H1 (cell line): ENCODE measurements at regions of chr17 and their contacts with region 1.

Region 1: GRCh38 chr17:82022981-82023374 is at the start of gene LRRC45:
- DNase-seq: peak; percentile 98 to 99
- H3K4me3 ChIP-seq: peak within 1 kb of the TSS; percentile 83 to 93 (median 86)
- H3K27ac ChIP-seq: peak within 1 kb of the TSS; percentile 46; the same call in 1 of the 2 replicates
- H3K4me1 ChIP-seq: peaks cover 0 to 14% (median 8%) of the 10 kb centered on the region in 4 experiments; a peak in 5 of 7 replicates
- H3K27me3 ChIP-seq: no peaks in the 10 kb centered on the region
- CTCF ChIP-seq: no peak
- EP300 ChIP-seq: no peak
- POLR2A ChIP-seq: no peak
- RAD21 ChIP-seq: no peak
- total RNA-seq, gene LRRC45: 28.2 and 29.0 TPM in 2 replicates

Region 2: DNA sequence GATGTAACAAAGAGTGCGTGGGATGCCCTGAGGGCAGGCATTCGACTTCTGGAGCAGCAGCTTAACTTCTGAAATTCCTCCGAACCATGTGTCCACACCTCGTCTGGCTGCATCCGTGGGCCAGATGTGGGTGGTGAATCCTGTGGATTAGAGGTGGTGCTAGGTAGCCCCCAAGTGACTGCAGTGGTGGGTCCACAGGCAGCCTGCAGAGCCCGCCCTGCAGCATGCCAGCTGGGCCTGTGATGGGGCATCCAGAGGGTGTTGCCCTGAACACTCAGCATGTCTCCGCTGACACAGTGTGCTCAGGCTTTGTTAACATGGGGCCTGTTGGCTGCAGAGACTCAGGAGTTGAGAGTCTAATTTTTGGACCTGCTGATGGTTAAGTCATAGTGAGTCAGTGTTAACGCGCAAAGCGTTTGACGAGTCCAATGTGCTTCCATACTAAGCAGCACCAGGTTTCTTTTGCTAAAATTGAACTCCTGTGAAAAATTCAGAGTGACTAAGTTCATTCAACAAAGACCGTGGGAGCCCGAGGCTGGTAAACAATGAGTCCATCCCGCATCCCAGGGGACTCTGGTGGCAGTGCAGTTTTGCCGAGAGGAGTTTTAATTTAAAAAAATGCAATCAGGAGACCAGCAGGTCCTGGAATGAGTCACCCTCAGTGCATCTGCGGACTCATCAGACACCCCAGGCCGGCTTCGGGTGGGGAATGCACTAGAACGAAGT is 124.7 kb before region 1 on chr17:
- CTCF ChIA-PET with region 1: no interaction called
- POLR2A ChIA-PET with region 1: no interaction called
- DNase-seq: no peak
- H3K4me3 ChIP-seq: no peak overlapping the region
- H3K27ac ChIP-seq: no peak overlapping the region
- H3K4me1 ChIP-seq: peaks cover 0 to 8% (median 2%) of the 10 kb centered on the region in 4 experiments; a peak in 3 of 7 replicates
- H3K27me3 ChIP-seq: peaks cover 0 to 22% (median 14%) of the 10 kb centered on the region in 4 experiments; a peak in 5 of 7 replicates
- CTCF ChIP-seq: no peak
- EP300 ChIP-seq: no peak
- POLR2A ChIP-seq: no peak
- RAD21 ChIP-seq: no peak

Region 3: DNA sequence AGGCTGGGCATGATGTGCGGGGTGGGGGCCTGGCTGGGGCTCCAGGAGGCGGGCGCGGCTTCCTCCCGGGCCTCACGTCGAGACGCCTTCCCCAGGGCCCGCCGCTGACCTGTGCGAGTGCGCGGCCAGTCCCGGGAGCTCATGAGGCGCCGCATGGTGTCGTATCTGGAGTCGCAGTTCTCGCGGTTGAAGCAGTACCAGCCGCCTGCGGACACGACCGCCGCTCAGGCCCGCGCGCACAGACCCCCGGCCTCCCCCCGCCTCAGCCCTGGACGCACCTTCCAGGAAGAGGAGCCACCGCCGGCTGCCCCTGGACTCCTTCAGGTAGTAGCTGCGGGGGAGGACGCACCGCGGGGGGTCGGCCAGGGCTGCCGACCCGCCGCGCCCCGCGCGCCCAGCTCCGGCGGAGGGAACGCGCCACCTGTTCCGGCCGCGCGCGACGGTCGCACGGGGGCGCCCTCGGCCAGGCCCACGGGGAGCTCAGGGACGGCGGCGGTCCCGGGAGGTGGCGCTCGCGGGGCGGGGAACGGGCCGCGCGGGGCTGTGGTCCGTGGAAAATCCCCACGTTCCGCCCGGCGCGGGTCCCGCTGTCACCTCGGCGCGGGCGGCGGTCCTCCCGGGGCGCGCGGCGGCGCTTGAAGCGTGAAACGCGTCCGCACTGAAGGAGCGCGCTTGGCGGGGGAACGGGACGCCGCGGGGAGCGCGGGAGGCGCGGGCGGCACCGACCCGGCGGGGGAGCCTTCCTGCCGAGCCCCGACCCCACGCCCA is 63.4 kb before region 1 on chr17:
- CTCF ChIA-PET with region 1: interaction called, 13 read pairs
- POLR2A ChIA-PET with region 1: interaction called, 3 read pairs
- DNase-seq: peak in 1 of 2 experiments; percentile 72
- H3K4me3 ChIP-seq: peak overlapping the region in 1 of 4 experiments; percentile 52; a peak in 2 of 8 replicates
- H3K27ac ChIP-seq: no peak overlapping the region
- H3K4me1 ChIP-seq: peaks cover 0 to 6% (median 1%) of the 10 kb centered on the region in 4 experiments; a peak in 4 of 7 replicates
- H3K27me3 ChIP-seq: peaks cover 46 to 80% (median 63%) of the 10 kb centered on the region in 4 experiments
- CTCF ChIP-seq: peak; percentile 51 to 98 (median 75)
- EP300 ChIP-seq: no peak
- POLR2A ChIP-seq: no peak
- RAD21 ChIP-seq: peak; percentile 26 to 68; a peak in 3 of 4 replicates

Region 4: DNA sequence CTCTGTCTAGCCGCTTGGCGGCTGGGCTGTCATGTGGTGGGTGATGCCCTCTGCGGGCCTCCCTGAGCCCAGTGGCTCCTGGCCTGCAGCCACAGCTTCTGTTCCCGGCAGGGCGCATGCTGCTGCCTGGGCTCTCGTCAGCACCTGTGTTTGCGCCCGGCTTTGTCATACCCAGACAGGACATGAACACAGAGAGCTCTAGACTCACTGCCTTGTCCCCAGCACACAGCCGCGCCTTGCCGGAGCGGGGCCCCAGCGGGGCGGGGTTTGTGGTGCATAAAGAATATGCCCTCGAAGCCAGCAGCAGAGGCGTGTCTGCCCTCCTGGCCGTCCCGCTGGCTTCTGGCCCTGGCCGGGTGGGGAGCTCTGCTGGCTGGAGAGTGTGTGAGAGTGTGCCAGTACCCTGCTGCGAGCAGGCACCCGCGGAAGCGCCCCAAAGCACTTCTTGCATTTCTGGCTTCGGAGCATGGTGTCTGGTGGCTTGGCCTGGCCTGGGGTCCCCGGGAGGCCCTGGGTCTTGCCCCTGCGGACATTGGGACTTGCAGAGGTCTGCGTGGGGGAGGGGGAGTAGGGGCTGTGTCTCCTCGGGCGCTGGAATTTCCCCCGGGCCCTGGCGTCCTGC is 31.2 kb before region 1 on chr17:
- CTCF ChIA-PET with region 1: interaction called, 20 read pairs
- POLR2A ChIA-PET with region 1: interaction called, 7 read pairs
- DNase-seq: no peak
- H3K4me3 ChIP-seq: peak overlapping the region in 1 of 4 experiments; percentile 9; a peak in 2 of 8 replicates
- H3K27ac ChIP-seq: no peak overlapping the region
- H3K4me1 ChIP-seq: peaks cover 0 to 31% (median 27%) of the 10 kb centered on the region in 4 experiments; a peak in 6 of 7 replicates
- H3K27me3 ChIP-seq: no peaks in the 10 kb centered on the region
- CTCF ChIP-seq: no peak
- EP300 ChIP-seq: no peak
- POLR2A ChIP-seq: no peak
- RAD21 ChIP-seq: no peak

Region 5: GRCh38 chr17:82037113-82037888 is 14.3 kb after region 1 on chr17 and contains the start of gene DCXR:
- CTCF ChIA-PET with region 1: interaction called, 11 read pairs
- POLR2A ChIA-PET with region 1: interaction called, 22 read pairs
- DNase-seq: peak; percentile 86 to 97
- H3K4me3 ChIP-seq: peak within 1 kb of the TSS; percentile 49 to 77 (median 66)
- H3K27ac ChIP-seq: peak within 1 kb of the TSS; percentile 63; the same call in 1 of the 2 replicates
- H3K4me1 ChIP-seq: peaks cover 3 to 10% (median 6%) of the 10 kb centered on the region in 4 experiments; a peak in 6 of 7 replicates
- H3K27me3 ChIP-seq: no peaks in the 10 kb centered on the region; a peak in 1 of 7 replicates
- CTCF ChIP-seq: peak; percentile 83 to 94 (median 85)
- EP300 ChIP-seq: no peak
- POLR2A ChIP-seq: peak in 1 of 2 experiments; percentile 83; a peak in 2 of 3 replicates
- RAD21 ChIP-seq: peak; percentile 19 to 44; a peak in 2 of 4 replicates
- total RNA-seq, gene DCXR: 96.3 and 110 TPM in 2 replicates

Region 6: DNA sequence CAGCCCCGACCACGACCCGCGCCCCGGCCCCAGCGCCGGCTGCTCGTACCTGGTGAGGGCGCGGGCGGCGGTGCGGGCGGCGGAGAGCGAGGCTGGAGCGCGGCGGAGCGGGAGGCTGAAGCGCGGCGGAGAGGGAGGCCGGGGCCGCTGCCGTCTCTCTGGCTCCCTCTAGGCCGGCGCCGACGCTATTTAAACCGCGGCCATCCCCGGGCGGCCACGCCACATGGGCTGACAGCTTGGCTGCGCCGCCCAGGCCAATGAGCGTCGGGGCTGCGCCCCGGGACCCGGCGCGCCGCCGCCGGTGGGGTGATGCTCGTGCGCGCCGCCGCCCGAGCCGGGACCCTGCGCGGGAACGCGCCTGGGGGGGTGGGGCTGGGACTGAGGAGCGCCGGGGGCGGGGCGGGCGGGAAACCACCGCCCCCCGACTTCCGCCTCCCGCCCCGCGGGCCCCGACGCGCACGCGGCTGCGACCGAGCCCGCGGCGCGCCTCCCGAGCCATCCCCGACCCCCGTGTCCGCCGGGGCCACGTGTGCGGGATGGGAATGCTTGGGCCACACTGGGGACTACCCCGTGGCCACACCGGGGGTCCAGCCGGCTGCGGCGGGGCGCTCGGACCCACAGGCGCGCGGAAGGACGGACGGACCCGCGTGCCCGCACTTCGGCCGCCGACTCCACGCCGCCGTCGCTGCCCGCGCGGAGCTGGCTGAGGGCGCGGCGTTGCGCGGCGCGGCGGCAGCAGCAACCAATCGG is 75.3 kb after region 1 on chr17 and contains the start of gene FASN:
- CTCF ChIA-PET with region 1: interaction called, 3 read pairs
- POLR2A ChIA-PET with region 1: interaction called, 15 read pairs
- DNase-seq: peak; percentile 81 to 89
- H3K4me3 ChIP-seq: peak within 1 kb of the TSS; percentile 62 to 94 (median 78)
- H3K27ac ChIP-seq: peak within 1 kb of the TSS; percentile 96
- H3K4me1 ChIP-seq: peaks cover 0 to 47% (median 38%) of the 10 kb centered on the region in 4 experiments; a peak in 6 of 7 replicates
- H3K27me3 ChIP-seq: no peaks in the 10 kb centered on the region
- CTCF ChIP-seq: peak in 2 of 3 experiments; percentile 40 to 48; a peak in 2 of 4 replicates
- EP300 ChIP-seq: no peak; a peak in 1 of 3 replicates
- POLR2A ChIP-seq: peak; percentile 86 to 92
- RAD21 ChIP-seq: peak in 1 of 2 experiments; percentile 20; a peak in 2 of 4 replicates
- total RNA-seq, gene FASN: 559 and 561 TPM in 2 replicates